ENCODE measurements at regions of chr6 and their contacts with region 1.

Region 1: GRCh38 chr6:1524040-1524480 is 85.7 kb upstream of the FOXC1 start:
- DNase-seq: peak; percentile 54 to 89 (median 70)
- ATAC-seq: peak; percentile 67
- H3K4me3 ChIP-seq: peak overlapping the region; percentile 40
- H3K4me3 Mint-ChIP-seq: peak overlapping the region; percentile 75
- H3K27ac ChIP-seq: peak overlapping the region in 1 of 2 donors; percentile 45
- H3K27ac Mint-ChIP-seq: peak overlapping the region; percentile 94
- H3K4me1 ChIP-seq: peaks cover 54% of the 10 kb centered on the region
- H3K4me1 Mint-ChIP-seq: peaks cover 52% of the 10 kb centered on the region
- H3K27me3 ChIP-seq: no peaks in the 10 kb centered on the region
- H3K27me3 Mint-ChIP-seq: no peaks in the 10 kb centered on the region
- CTCF ChIP-seq: peak; percentile 94

Region 2: GRCh38 chr6:1535295-1535694 is 11.2 kb after region 1 on chr6:
- CTCF ChIA-PET with region 1: interaction called, 8 read pairs
- POLR2A ChIA-PET with region 1: interaction called, 11 read pairs
- intact Hi-C with region 1: no loop called
- DNase-seq: peak in 12 of 14 experiments; percentile 14 to 79 (median 48)
- ATAC-seq: peak; percentile 97
- H3K4me3 ChIP-seq: no peak overlapping the region
- H3K4me3 Mint-ChIP-seq: peak overlapping the region; percentile 73
- H3K27ac ChIP-seq: peak overlapping the region; percentile 2 to 33
- H3K27ac Mint-ChIP-seq: no peak overlapping the region
- H3K4me1 ChIP-seq: peaks cover 32% of the 10 kb centered on the region
- H3K4me1 Mint-ChIP-seq: peaks cover 36% of the 10 kb centered on the region
- H3K27me3 ChIP-seq: no peaks in the 10 kb centered on the region
- H3K27me3 Mint-ChIP-seq: no peaks in the 10 kb centered on the region
- CTCF ChIP-seq: no peak

Region 3: GRCh38 chr6:1596088-1596852 is 72.2 kb after region 1 on chr6:
- CTCF ChIA-PET with region 1: interaction called, 3 read pairs
- POLR2A ChIA-PET with region 1: interaction called, 4 read pairs
- intact Hi-C with region 1: loop called in 1 of 2 experiments (anchors 1 kb)
- DNase-seq: peak; percentile 42 to 82 (median 58)
- ATAC-seq: peak; percentile 90
- H3K4me3 ChIP-seq: no peak overlapping the region
- H3K4me3 Mint-ChIP-seq: peak overlapping the region; percentile 49
- H3K27ac ChIP-seq: no peak overlapping the region
- H3K27ac Mint-ChIP-seq: no peak overlapping the region
- H3K4me1 ChIP-seq: peaks cover 8% of the 10 kb centered on the region
- H3K4me1 Mint-ChIP-seq: peaks cover 8% of the 10 kb centered on the region
- H3K27me3 ChIP-seq: peaks cover 33 to 44% of the 10 kb centered on the region in 2 experiments
- H3K27me3 Mint-ChIP-seq: peaks cover 70% of the 10 kb centered on the region
- CTCF ChIP-seq: peak; percentile 93

Region 4: GRCh38 chr6:2196079-2196679 is 672.1 kb after region 1 on chr6:
- CTCF ChIA-PET with region 1: no interaction called
- POLR2A ChIA-PET with region 1: no interaction called
- intact Hi-C with region 1: loop called in 1 of 2 experiments (anchors 5 kb)
- DNase-seq: peak in 7 of 14 experiments; percentile 7 to 69 (median 47)
- ATAC-seq: peak; percentile 58
- H3K4me3 ChIP-seq: no peak overlapping the region
- H3K4me3 Mint-ChIP-seq: no peak overlapping the region
- H3K27ac ChIP-seq: no peak overlapping the region
- H3K27ac Mint-ChIP-seq: no peak overlapping the region
- H3K4me1 ChIP-seq: no peaks in the 10 kb centered on the region
- H3K4me1 Mint-ChIP-seq: peaks cover 4% of the 10 kb centered on the region
- H3K27me3 ChIP-seq: no peaks in the 10 kb centered on the region
- H3K27me3 Mint-ChIP-seq: no peaks in the 10 kb centered on the region
- CTCF ChIP-seq: peak; percentile 82

Region 5: DNA sequence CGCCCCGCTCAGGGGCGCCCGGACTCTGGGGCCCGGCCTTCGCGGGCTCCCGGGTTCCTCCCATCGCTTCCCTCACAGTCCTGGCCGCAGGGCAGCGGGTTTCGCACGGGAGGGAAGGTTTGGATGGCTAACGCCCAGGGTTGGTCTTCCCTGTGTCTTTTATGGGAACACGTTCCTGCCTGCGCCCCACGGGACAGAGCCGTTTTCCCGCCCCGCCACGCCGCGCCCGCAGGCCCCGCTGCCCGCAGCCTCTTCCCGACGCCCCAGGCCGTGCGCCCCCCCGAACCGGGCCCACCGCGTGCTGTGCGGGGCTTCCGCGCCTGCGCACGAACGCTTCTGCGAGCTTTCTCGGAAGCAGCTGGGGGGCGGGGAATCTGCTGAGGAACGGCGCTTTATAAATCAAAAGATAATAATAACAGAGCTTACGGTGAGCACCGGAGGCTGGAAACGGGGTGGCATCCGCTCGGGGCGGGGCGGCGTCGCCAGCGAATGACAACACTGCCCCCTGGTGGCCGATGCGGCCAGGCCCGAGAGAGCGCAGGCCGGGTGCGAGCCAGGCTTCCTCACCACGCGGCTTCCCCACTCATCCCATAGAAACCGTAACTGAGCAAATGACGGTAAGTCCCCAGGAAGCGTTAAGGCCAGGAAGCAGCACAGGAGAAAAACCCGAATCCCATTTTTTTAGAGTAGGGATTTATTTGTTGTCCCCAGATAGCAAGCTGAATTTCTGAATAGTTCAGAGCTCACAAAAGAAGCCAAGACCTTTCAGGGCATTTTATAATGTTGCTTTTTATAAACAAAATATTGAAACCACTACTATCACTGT is 1110.3 kb after region 1 on chr6:
- CTCF ChIA-PET with region 1: no interaction called
- POLR2A ChIA-PET with region 1: no interaction called
- intact Hi-C with region 1: loop called in 1 of 2 experiments (anchors 5 kb)
- DNase-seq: peak; percentile 68 to 90 (median 80)
- ATAC-seq: peak; percentile 94
- H3K4me3 ChIP-seq: peak overlapping the region; percentile 44
- H3K4me3 Mint-ChIP-seq: peak overlapping the region; percentile 84
- H3K27ac ChIP-seq: no peak overlapping the region
- H3K27ac Mint-ChIP-seq: no peak overlapping the region
- H3K4me1 ChIP-seq: peaks cover 9% of the 10 kb centered on the region
- H3K4me1 Mint-ChIP-seq: no peaks in the 10 kb centered on the region
- H3K27me3 ChIP-seq: peaks cover 0 to 5% of the 10 kb centered on the region in 2 experiments
- H3K27me3 Mint-ChIP-seq: peaks cover 22% of the 10 kb centered on the region
- CTCF ChIP-seq: peak; percentile 97